Spleen (tissue), 13 donors: ENCODE measurements at regions of chr4 and their contacts with region 1.

Region 1: DNA sequence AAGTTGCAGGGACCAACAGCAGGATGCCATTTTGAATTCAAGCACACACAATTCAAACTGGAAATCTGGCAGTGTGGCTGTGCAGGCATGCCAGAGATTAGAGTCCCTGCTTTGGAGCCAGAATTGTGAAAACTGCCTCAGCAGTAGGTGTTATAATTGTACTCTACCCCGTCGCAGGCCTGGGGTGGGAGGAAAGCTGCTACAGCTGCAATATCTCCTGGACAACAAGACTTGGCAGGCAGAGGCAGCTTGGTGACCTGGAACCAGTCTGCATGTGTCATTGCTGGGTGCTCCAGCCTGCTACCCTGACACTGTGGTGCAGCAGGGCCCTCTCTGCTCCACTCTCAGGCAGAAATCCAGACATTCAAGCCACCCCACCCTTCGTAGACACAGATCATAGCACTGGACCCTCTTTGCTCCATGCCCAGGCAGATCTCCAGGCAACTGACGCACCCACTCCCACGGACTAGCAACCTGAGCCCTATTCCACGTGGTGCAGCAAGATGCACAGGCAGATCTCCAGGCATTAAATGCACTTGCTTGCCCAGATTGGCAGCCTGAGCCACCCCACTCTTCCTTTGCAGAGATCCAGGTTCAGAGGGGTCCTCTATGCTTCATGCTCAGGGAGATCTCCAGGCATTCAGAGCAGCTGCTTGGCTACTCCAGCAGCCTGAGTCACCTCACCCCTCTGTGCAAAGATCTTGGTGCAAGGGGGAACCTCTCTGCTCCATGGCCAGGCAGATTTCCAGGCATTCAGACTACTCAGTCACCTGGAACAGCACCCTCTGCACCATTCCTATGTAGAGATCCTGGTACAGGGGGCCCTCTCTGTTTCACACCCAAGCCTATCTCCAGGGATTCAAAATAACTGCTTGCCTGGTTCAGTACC is 140.5 kb downstream of the LRBA start:
- DNase-seq: no peak
- H3K4me3 ChIP-seq: no peak overlapping the region
- H3K27ac ChIP-seq: no peak overlapping the region
- H3K4me1 ChIP-seq: no peaks in the 10 kb centered on the region
- H3K27me3 ChIP-seq: no peaks in the 10 kb centered on the region
- CTCF ChIP-seq: no peak
- POLR2A ChIP-seq: no peak

Region 2: GRCh38 chr4:150297861-150298474 is 576.6 kb before region 1 on chr4:
- intact Hi-C with region 1: loop called (anchors 10 kb)
- DNase-seq: no peak
- H3K4me3 ChIP-seq: no peak overlapping the region
- H3K27ac ChIP-seq: no peak overlapping the region
- H3K4me1 ChIP-seq: no peaks in the 10 kb centered on the region
- H3K27me3 ChIP-seq: no peaks in the 10 kb centered on the region
- CTCF ChIP-seq: peak in 7 of 11 experiments; percentile 25 to 55 (median 44)
- POLR2A ChIP-seq: no peak

Region 3: GRCh38 chr4:151484396-151485102 is 610.0 kb after region 1 on chr4:
- intact Hi-C with region 1: no loop called
- DNase-seq: no peak
- H3K4me3 ChIP-seq: no peak overlapping the region
- H3K27ac ChIP-seq: no peak overlapping the region
- H3K4me1 ChIP-seq: no peaks in the 10 kb centered on the region
- H3K27me3 ChIP-seq: peaks cover 0 to 5% (median 0%) of the 10 kb centered on the region in 7 donors
- CTCF ChIP-seq: no peak
- POLR2A ChIP-seq: no peak